Heart left ventricle (tissue), 16 donors: ENCODE measurements at regions of chr14 and their contacts with region 1.

Region 1: DNA sequence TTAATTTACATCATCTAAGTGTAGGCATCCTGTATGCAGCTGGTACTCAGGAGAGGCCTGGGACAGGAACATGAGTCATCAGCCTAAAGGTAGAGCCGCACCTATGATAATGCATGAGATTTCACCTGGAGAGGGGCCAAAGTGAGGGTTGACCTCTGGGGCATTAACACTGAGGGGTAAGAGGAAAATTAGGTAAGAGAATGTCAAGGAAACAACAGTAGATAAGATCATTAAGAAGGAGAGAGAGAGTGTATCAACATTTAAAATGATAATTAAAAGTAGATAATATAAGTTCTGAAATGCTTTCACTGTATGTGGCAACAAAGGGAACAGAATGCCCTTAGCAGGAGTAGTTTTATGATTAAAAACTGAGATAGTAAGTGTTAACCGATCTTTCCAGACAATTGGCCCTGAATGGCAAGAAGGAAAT is 20.1 kb upstream of the SSTR1 start:
- DNase-seq: no peak
- ATAC-seq: no peak
- H3K4me3 ChIP-seq: no peak overlapping the region
- H3K27ac ChIP-seq: no peak overlapping the region
- H3K4me1 ChIP-seq: no peaks in the 10 kb centered on the region
- H3K27me3 ChIP-seq: no peaks in the 10 kb centered on the region
- CTCF ChIP-seq: no peak
- POLR2A ChIP-seq: no peak

Region 2: DNA sequence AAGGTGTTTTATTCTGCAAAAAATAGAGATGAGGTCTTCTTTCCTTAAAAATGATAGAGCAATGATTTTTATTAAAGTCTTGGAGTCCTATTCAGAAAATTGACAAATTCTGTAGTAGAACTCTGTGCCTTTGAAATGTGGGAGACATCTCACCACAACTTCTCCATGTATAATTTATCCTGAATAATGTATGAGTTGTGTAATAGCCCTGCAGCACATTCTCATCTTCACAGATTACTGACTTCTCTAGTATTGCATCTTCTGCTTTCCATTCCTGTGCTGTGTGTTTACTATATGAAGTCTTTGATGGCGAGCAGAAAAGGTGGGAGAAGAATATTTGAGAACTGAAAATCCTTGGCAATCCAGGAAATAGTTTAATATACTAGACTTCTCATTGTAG is 336.6 kb before region 1 on chr14:
- intact Hi-C with region 1: loop called in 1 of 10 experiments (anchors 5 kb)
- DNase-seq: no peak
- ATAC-seq: no peak
- H3K4me3 ChIP-seq: no peak overlapping the region
- H3K27ac ChIP-seq: no peak overlapping the region
- H3K4me1 ChIP-seq: no peaks in the 10 kb centered on the region
- H3K27me3 ChIP-seq: peaks cover 0 to 17% (median 0%) of the 10 kb centered on the region in 9 donors
- CTCF ChIP-seq: no peak
- POLR2A ChIP-seq: no peak

Region 3: DNA sequence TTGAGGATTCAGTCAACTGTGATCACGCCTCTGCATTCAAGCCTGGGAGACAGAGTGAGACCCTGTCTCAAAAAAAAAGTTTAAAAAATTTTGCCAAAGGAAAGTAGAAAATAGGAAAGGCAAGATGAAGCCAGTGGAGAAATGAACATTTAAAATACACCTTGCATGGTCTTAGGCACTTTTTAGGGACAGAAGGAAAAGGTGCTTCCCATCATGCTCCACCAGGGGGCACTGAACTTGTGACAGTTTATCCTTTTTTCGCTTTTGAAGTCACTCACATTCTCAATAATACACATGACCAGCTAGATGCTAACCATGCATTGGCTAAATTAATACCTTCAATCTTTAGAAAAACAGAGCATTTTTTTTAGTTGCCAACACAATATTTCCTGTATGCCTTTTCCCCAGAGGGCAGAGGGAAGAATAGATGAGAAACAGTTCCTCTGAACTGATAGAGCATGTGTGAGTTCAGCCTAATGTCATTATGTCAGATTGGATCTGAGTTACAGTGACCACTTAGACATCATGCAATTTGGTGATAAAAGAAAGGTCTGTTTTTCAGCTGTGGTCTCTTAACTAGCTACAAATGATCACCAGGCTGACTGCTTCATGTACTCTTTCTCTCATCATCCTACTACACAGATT is 201.7 kb before region 1 on chr14:
- intact Hi-C with region 1: loop called in 1 of 10 experiments (anchors 10 kb)
- DNase-seq: peak in 3 of 5 donors; percentile 13 to 24 (median 21)
- ATAC-seq: no peak
- H3K4me3 ChIP-seq: no peak overlapping the region
- H3K27ac ChIP-seq: no peak overlapping the region
- H3K4me1 ChIP-seq: no peaks in the 10 kb centered on the region
- H3K27me3 ChIP-seq: no peaks in the 10 kb centered on the region
- CTCF ChIP-seq: peak; percentile 53 to 77 (median 68)
- POLR2A ChIP-seq: no peak

Region 4: DNA sequence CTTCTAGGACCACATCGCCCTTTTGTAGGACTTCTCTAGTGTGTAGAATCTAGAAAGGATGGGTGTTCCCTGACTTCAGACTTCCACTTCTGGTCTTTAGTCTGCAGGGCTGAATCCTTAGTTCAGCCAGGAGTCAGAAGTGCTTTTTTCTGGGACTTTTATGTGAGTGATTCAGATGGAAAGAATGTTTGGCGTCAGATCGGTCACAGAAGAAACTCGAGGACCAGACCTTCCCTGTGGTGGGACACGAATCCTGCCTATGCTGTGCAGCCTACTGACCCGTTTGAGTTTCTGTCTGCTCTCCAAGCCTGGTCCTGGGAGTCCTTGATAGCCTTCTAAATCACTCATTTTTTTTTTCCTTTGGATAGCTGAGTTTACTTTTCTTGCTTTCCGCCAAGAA is 145.3 kb before region 1 on chr14:
- intact Hi-C with region 1: no loop called
- DNase-seq: no peak
- ATAC-seq: peak in 1 of 4 donors; percentile 26
- H3K4me3 ChIP-seq: no peak overlapping the region
- H3K27ac ChIP-seq: no peak overlapping the region
- H3K4me1 ChIP-seq: no peaks in the 10 kb centered on the region
- H3K27me3 ChIP-seq: no peaks in the 10 kb centered on the region
- CTCF ChIP-seq: no peak
- POLR2A ChIP-seq: no peak

Region 5: DNA sequence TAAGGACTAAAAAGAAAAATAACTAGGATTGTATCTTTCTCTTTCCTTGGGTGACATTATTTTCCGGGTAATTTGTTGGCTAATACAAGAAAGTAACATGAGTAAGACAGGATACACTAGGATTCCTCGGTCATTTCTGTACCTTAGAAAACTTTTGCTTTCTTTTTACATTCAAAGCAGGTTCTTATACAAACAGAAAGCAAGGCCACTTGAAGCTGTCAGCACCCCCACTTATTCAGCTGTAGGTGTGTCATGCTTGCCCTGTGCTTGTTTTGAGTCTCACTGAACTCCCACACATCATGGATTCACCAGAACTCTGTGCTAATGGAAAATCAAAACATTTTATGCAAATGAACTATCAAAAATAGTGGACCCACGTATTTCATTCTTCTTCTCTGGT is 335.1 kb after region 1 on chr14:
- intact Hi-C with region 1: no loop called
- DNase-seq: no peak
- ATAC-seq: no peak
- H3K4me3 ChIP-seq: no peak overlapping the region
- H3K27ac ChIP-seq: no peak overlapping the region
- H3K4me1 ChIP-seq: no peaks in the 10 kb centered on the region
- H3K27me3 ChIP-seq: no peaks in the 10 kb centered on the region
- CTCF ChIP-seq: no peak
- POLR2A ChIP-seq: no peak